ENCODE measurements at regions of chr17 and their contacts with region 1.

Region 1: DNA sequence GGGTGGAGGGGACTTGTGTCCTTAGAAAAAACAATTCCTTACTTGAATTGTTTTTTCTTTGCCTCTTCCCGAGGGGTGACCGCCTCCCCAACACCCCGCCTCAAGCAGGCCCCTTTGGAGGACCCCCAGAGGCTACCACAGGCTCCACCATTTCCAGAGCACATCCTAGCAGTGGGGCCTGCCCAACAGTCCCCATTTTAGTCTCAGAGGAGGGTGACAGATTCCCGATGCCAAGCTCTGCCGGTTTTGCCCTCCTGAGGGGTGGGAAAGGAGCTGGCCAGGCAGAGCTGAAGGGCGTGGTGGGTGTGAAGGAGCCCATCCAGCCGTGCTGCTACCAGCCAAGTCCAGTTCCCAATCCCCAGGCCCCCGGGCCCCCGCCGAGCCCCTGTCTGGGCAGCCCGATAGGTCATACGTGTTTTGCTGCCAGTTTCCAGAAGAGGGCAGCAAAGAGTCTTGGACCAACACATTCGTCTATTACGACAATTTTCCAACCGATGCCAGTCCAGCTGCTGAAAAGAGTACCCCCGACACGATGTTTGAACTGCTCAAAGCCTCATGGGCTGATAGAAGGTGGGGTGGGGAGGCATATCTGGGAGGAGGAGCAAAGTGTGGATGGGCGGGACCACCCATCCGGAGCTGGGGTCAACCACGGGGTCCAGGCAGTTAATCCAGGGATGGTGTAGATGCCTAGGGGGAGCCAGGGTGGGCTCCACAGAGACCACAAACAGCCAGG is 18.8 kb upstream of the GAA start:
- DNase-seq: peak in 1 of 3 donors; percentile 70
- ATAC-seq: peak; percentile 72 to 90 (median 86)
- H3K4me3 ChIP-seq: no peak overlapping the region
- H3K27ac ChIP-seq: no peak overlapping the region
- H3K4me1 ChIP-seq: peaks cover 0 to 6% (median 0%) of the 10 kb centered on the region in 4 donors
- H3K27me3 ChIP-seq: no peaks in the 10 kb centered on the region
- CTCF ChIP-seq: peak; percentile 57 to 80 (median 76)
- POLR2A ChIP-seq: no peak

Region 2: GRCh38 chr17:80012765-80013741 is 69.5 kb before region 1 on chr17:
- intact Hi-C with region 1: loop called in 1 of 2 experiments (anchors 5 kb)
- DNase-seq: peak in 2 of 3 donors; percentile 16 to 49
- ATAC-seq: no peak
- H3K4me3 ChIP-seq: no peak overlapping the region
- H3K27ac ChIP-seq: no peak overlapping the region
- H3K4me1 ChIP-seq: peaks cover 0 to 8% (median 3%) of the 10 kb centered on the region in 4 donors
- H3K27me3 ChIP-seq: no peaks in the 10 kb centered on the region
- CTCF ChIP-seq: no peak
- POLR2A ChIP-seq: no peak

Region 3: GRCh38 chr17:80254396-80255251 is 172.1 kb after region 1 on chr17:
- intact Hi-C with region 1: loop called in 1 of 2 experiments (anchors 10 kb)
- DNase-seq: no peak
- ATAC-seq: peak; percentile 53 to 76 (median 66)
- H3K4me3 ChIP-seq: no peak overlapping the region
- H3K27ac ChIP-seq: peak overlapping the region in 1 of 3 donors; percentile 46
- H3K4me1 ChIP-seq: peaks cover 0 to 8% (median 0%) of the 10 kb centered on the region in 4 donors
- H3K27me3 ChIP-seq: no peaks in the 10 kb centered on the region
- CTCF ChIP-seq: no peak
- POLR2A ChIP-seq: no peak

Measured in right lobe of liver (tissue), 6 donors.